ENCODE measurements at regions of chr2 and their contacts with region 1.

Region 1: DNA sequence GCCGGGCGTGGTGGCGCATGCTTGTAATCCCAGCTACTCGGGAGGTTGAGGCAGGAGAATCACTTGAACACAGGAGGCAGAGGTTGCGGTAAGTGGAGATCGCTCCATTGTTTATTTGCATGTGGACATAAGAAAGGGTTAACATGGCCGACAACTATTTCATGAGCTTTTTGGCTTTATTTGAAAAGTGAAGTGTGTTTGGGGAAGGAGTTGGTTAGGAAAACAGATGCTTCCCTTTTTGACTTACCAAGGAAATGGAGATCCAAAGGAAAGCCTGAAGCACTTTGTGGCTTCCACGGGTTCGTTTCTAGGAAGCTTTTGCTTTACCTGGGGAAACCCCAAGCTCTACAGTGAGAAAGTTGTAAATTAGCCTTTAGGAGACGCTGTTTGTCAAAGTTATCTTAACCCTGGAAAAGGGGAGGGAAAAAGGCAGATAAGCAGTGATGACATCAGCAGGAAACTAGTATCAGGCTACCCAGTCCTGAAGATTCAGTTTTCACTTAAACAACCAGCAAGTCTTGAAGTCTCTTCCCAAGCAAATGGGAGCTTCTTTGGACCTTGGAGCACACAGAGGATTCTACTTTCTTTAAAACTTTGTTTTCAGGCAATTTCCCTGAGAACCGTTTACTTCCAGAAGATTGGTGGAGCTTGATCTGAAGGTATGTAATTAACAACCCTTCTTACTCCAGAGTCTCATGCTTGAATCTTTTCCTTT is at the start of gene CASP10:
- DNase-seq: peak in 7 of 9 donors; percentile 67 to 83 (median 77)
- ATAC-seq: peak; percentile 90
- H3K4me3 ChIP-seq: peak within 1 kb of the TSS; percentile 68
- H3K4me3 Mint-ChIP-seq: peak within 1 kb of the TSS; percentile 87 to 99 (median 95)
- H3K27ac ChIP-seq: peak within 1 kb of the TSS; percentile 89
- H3K27ac Mint-ChIP-seq: peak within 1 kb of the TSS; percentile 86 to 98 (median 95)
- H3K4me1 ChIP-seq: peaks cover 22 to 24% of the 10 kb centered on the region in 2 donors
- H3K4me1 Mint-ChIP-seq: peaks cover 26 to 46% (median 29%) of the 10 kb centered on the region in 7 donors
- H3K27me3 ChIP-seq: no peaks in the 10 kb centered on the region
- H3K27me3 Mint-ChIP-seq: no peaks in the 10 kb centered on the region
- total RNA-seq, gene CASP10: 29.0 to 49.8 (median 42.9) TPM

Region 2: DNA sequence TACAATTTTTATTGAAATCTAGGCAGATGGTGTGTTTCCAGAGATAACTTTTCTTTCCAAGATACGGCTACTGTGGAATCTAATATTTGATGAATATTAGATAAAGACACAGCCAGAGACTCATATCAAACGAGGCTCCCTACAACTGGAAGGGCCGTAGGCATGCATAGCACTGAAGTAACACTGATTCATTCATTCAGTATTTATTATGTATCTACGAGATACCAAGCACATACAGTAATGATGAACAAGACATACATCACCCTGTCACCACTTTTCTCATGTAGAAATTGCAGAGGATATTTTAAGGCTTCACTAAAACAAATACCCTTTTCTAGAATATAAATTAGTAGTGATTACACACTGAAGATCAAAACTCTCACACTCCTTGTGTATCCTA is 747.4 kb before region 1 on chr2:
- CTCF ChIA-PET with region 1: no interaction called
- POLR2A ChIA-PET with region 1: no interaction called
- intact Hi-C with region 1: no loop called
- DNase-seq: no peak
- ATAC-seq: no peak
- H3K4me3 ChIP-seq: no peak overlapping the region
- H3K4me3 Mint-ChIP-seq: no peak overlapping the region
- H3K27ac ChIP-seq: no peak overlapping the region
- H3K27ac Mint-ChIP-seq: no peak overlapping the region
- H3K4me1 ChIP-seq: no peaks in the 10 kb centered on the region
- H3K4me1 Mint-ChIP-seq: peaks cover 0 to 6% (median 0%) of the 10 kb centered on the region in 7 donors
- H3K27me3 ChIP-seq: no peaks in the 10 kb centered on the region
- H3K27me3 Mint-ChIP-seq: peaks cover 0 to 5% (median 0%) of the 10 kb centered on the region in 5 donors

Region 3: GRCh38 chr2:200742426-200742825 is 440.4 kb before region 1 on chr2:
- CTCF ChIA-PET with region 1: no interaction called
- POLR2A ChIA-PET with region 1: no interaction called
- intact Hi-C with region 1: no loop called
- DNase-seq: no peak
- ATAC-seq: no peak
- H3K4me3 ChIP-seq: no peak overlapping the region
- H3K4me3 Mint-ChIP-seq: no peak overlapping the region
- H3K27ac ChIP-seq: no peak overlapping the region
- H3K27ac Mint-ChIP-seq: no peak overlapping the region
- H3K4me1 ChIP-seq: no peaks in the 10 kb centered on the region
- H3K4me1 Mint-ChIP-seq: no peaks in the 10 kb centered on the region
- H3K27me3 ChIP-seq: no peaks in the 10 kb centered on the region
- H3K27me3 Mint-ChIP-seq: peaks cover 0 to 3% (median 2%) of the 10 kb centered on the region in 5 donors

Region 4: GRCh38 chr2:200888704-200889625 is 293.8 kb before region 1 on chr2 and contains the starts of genes NIF3L1 and PPIL3:
- CTCF ChIA-PET with region 1: no interaction called
- POLR2A ChIA-PET with region 1: no interaction called
- intact Hi-C with region 1: loop called in 1 of 2 experiments (anchors 1 kb)
- DNase-seq: peak; percentile 88 to 97 (median 95)
- ATAC-seq: peak; percentile 89
- H3K4me3 ChIP-seq: peak within 1 kb of the TSS; percentile 83
- H3K4me3 Mint-ChIP-seq: peak within 1 kb of the TSS; percentile 88 to 100 (median 96)
- H3K27ac ChIP-seq: peak within 1 kb of the TSS; percentile 86
- H3K27ac Mint-ChIP-seq: peak within 1 kb of the TSS; percentile 97 to 100 (median 100)
- H3K4me1 ChIP-seq: peaks cover 23 to 26% of the 10 kb centered on the region in 2 donors
- H3K4me1 Mint-ChIP-seq: peaks cover 35 to 75% (median 60%) of the 10 kb centered on the region in 7 donors
- H3K27me3 ChIP-seq: no peaks in the 10 kb centered on the region
- H3K27me3 Mint-ChIP-seq: no peaks in the 10 kb centered on the region
- total RNA-seq, gene NIF3L1: 11.5 to 33.9 (median 31.4) TPM
- total RNA-seq, gene PPIL3: 28.5 to 69.7 (median 49.1) TPM

Region 5: GRCh38 chr2:201084863-201085262 is 97.9 kb before region 1 on chr2:
- CTCF ChIA-PET with region 1: no interaction called
- POLR2A ChIA-PET with region 1: no interaction called
- intact Hi-C with region 1: no loop called
- DNase-seq: no peak
- ATAC-seq: peak; percentile 54
- H3K4me3 ChIP-seq: no peak overlapping the region
- H3K4me3 Mint-ChIP-seq: no peak overlapping the region
- H3K27ac ChIP-seq: no peak overlapping the region
- H3K27ac Mint-ChIP-seq: peak overlapping the region in 6 of 9 donors; percentile 18 to 63 (median 42)
- H3K4me1 ChIP-seq: no peaks in the 10 kb centered on the region
- H3K4me1 Mint-ChIP-seq: peaks cover 0 to 15% (median 6%) of the 10 kb centered on the region in 7 donors
- H3K27me3 ChIP-seq: no peaks in the 10 kb centered on the region
- H3K27me3 Mint-ChIP-seq: no peaks in the 10 kb centered on the region

Region 6: DNA sequence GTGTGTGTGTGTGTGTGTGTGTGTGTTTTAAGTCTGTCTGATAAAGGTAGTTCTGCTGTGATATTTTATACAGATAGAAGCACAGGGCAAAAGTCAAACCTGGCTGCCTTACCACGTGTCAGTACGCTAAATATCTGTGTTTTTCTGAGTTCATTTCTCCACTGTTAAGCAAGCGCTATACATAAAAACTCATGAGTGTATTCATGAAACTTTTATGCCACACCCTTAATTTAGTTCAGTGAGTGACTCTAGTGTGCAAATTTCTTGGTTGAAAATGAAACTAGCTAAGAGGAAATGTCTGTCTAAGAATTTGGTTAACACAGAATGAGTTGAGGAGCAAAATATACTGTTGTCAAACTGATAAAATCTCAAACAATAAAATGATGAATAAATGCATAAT is 11.3 kb after region 1 on chr2:
- CTCF ChIA-PET with region 1: interaction called, 38 read pairs
- POLR2A ChIA-PET with region 1: interaction called, 27 read pairs
- intact Hi-C with region 1: loop called (anchors 1 kb)
- DNase-seq: peak in 7 of 9 donors; percentile 20 to 49 (median 38)
- ATAC-seq: peak; percentile 66
- H3K4me3 ChIP-seq: peak overlapping the region; percentile 18
- H3K4me3 Mint-ChIP-seq: peak overlapping the region; percentile 48 to 98 (median 78)
- H3K27ac ChIP-seq: peak overlapping the region; percentile 62
- H3K27ac Mint-ChIP-seq: peak overlapping the region; percentile 78 to 96 (median 91)
- H3K4me1 ChIP-seq: peaks cover 39 to 73% of the 10 kb centered on the region in 2 donors
- H3K4me1 Mint-ChIP-seq: peaks cover 44 to 88% (median 72%) of the 10 kb centered on the region in 7 donors
- H3K27me3 ChIP-seq: no peaks in the 10 kb centered on the region
- H3K27me3 Mint-ChIP-seq: no peaks in the 10 kb centered on the region

Region 7: GRCh38 chr2:201257956-201258665 is 75.3 kb after region 1 on chr2:
- CTCF ChIA-PET with region 1: interaction called, 12 read pairs
- POLR2A ChIA-PET with region 1: interaction called, 20 read pairs
- intact Hi-C with region 1: loop called (anchors 1 kb)
- DNase-seq: peak; percentile 72 to 99 (median 98)
- ATAC-seq: peak; percentile 84
- H3K4me3 ChIP-seq: peak overlapping the region; percentile 80
- H3K4me3 Mint-ChIP-seq: peak overlapping the region; percentile 85 to 100 (median 94)
- H3K27ac ChIP-seq: peak overlapping the region; percentile 91
- H3K27ac Mint-ChIP-seq: peak overlapping the region; percentile 95 to 99 (median 98)
- H3K4me1 ChIP-seq: peaks cover 63 to 71% of the 10 kb centered on the region in 2 donors
- H3K4me1 Mint-ChIP-seq: peaks cover 44 to 91% (median 75%) of the 10 kb centered on the region in 7 donors
- H3K27me3 ChIP-seq: no peaks in the 10 kb centered on the region
- H3K27me3 Mint-ChIP-seq: no peaks in the 10 kb centered on the region

Region 8: GRCh38 chr2:201642579-201643215 is 459.9 kb after region 1 on chr2:
- CTCF ChIA-PET with region 1: no interaction called
- POLR2A ChIA-PET with region 1: no interaction called
- intact Hi-C with region 1: loop called (anchors 2 to 5 kb)
- DNase-seq: peak; percentile 81 to 94 (median 92)
- ATAC-seq: peak; percentile 94
- H3K4me3 ChIP-seq: peak overlapping the region; percentile 95
- H3K4me3 Mint-ChIP-seq: peak overlapping the region; percentile 86 to 99 (median 96)
- H3K27ac ChIP-seq: peak overlapping the region; percentile 87
- H3K27ac Mint-ChIP-seq: peak overlapping the region; percentile 76 to 100 (median 97)
- H3K4me1 ChIP-seq: peaks cover 3 to 5% of the 10 kb centered on the region in 2 donors
- H3K4me1 Mint-ChIP-seq: peaks cover 5 to 21% (median 12%) of the 10 kb centered on the region in 7 donors
- H3K27me3 ChIP-seq: no peaks in the 10 kb centered on the region
- H3K27me3 Mint-ChIP-seq: peaks cover 0 to 4% (median 0%) of the 10 kb centered on the region in 5 donors

Region 9: DNA sequence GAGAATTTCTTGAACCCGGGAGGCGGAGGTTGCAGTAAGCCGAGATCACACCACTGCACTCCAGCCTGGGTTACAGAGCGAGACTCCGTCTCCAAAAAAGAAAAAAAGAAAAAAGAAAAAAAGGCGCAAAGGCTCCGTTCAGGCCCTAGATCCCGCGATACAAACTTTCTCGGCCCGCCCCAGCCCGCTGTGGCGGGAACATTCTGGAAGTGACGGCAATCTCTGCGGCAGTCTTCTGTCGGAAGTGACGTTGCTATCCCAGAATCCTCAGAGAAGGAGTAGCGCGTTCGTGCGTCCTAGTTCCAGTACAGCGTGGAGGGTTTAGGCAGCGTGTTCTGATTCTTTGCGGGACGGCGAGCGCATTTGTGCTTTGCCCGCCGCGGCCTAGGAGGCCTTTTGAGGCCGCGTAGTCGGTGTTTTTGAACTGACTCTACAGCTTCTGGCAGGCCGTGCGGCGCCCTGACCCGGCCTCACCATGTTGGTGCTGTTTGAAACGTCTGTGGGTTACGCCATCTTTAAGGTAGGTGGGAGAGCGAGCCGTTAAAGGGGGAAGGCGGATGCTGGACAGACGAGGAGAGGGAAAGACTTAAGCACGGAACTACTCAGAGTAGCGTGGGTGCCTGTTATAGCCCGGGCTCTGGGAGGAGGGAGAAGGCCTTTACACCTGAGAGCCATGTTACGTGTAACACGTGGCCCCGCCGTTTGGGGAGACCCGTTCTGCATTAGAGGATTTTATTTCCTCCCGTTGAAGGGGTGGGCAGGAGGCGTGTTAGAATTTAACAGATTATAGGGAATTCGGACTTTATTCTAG is 1082.9 kb after region 1 on chr2 and contains the start of gene NOP58:
- CTCF ChIA-PET with region 1: interaction called, 6 read pairs
- POLR2A ChIA-PET with region 1: no interaction called
- intact Hi-C with region 1: loop called in 1 of 2 experiments (anchors 10 kb)
- DNase-seq: peak; percentile 69 to 96 (median 93)
- ATAC-seq: peak; percentile 90
- H3K4me3 ChIP-seq: peak within 1 kb of the TSS; percentile 93
- H3K4me3 Mint-ChIP-seq: peak within 1 kb of the TSS in 9 of 10 donors; percentile 53 to 71 (median 64)
- H3K27ac ChIP-seq: peak within 1 kb of the TSS; percentile 92
- H3K27ac Mint-ChIP-seq: peak within 1 kb of the TSS in 6 of 9 donors; percentile 4 to 83 (median 76)
- H3K4me1 ChIP-seq: peaks cover 17 to 34% of the 10 kb centered on the region in 2 donors
- H3K4me1 Mint-ChIP-seq: peaks cover 11 to 27% (median 21%) of the 10 kb centered on the region in 7 donors
- H3K27me3 ChIP-seq: no peaks in the 10 kb centered on the region
- H3K27me3 Mint-ChIP-seq: no peaks in the 10 kb centered on the region
- total RNA-seq, gene NOP58: 105 to 259 (median 110) TPM

Region 10: GRCh38 chr2:202883987-202884675 is 1701.3 kb after region 1 on chr2:
- CTCF ChIA-PET with region 1: no interaction called
- POLR2A ChIA-PET with region 1: no interaction called
- intact Hi-C with region 1: no loop called
- DNase-seq: no peak
- ATAC-seq: no peak
- H3K4me3 ChIP-seq: no peak overlapping the region
- H3K4me3 Mint-ChIP-seq: no peak overlapping the region
- H3K27ac ChIP-seq: no peak overlapping the region
- H3K27ac Mint-ChIP-seq: peak overlapping the region in 1 of 9 donors; percentile 46
- H3K4me1 ChIP-seq: no peaks in the 10 kb centered on the region
- H3K4me1 Mint-ChIP-seq: peaks cover 0 to 4% (median 0%) of the 10 kb centered on the region in 7 donors
- H3K27me3 ChIP-seq: no peaks in the 10 kb centered on the region
- H3K27me3 Mint-ChIP-seq: no peaks in the 10 kb centered on the region